Right ventricle myocardium inferior (tissue), 1 donor: ENCODE measurements at regions of chr18 and their contacts with region 1.

Region 1: GRCh38 chr18:54671291-54671881 is 80.3 kb downstream of the DYNAP start:
- DNase-seq: no peak
- ATAC-seq: no peak

Region 2: GRCh38 chr18:54444319-54444914 is 227.0 kb before region 1 on chr18:
- intact Hi-C with region 1: loop called (anchors 5 kb)
- DNase-seq: no peak
- ATAC-seq: no peak

Region 3: DNA sequence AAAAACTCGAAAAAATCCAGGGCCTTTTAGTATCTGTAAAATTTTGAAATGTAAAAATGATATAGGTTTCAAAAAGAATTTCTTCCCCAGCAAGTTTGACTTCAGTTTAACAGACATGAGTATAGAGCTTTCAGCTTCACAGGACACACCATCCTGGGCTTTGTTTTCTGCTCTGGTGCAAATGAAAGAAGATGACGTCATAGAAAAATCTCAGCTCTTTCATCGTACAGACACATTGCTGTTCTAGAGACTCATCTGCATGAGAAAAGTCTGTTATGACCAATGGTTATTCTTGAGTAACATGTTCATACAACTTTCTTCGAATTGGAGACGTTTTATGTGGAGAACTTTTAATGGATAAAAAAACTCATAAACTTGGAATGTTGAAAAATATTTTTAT is 192.0 kb before region 1 on chr18:
- intact Hi-C with region 1: no loop called
- DNase-seq: no peak
- ATAC-seq: no peak

Region 4: DNA sequence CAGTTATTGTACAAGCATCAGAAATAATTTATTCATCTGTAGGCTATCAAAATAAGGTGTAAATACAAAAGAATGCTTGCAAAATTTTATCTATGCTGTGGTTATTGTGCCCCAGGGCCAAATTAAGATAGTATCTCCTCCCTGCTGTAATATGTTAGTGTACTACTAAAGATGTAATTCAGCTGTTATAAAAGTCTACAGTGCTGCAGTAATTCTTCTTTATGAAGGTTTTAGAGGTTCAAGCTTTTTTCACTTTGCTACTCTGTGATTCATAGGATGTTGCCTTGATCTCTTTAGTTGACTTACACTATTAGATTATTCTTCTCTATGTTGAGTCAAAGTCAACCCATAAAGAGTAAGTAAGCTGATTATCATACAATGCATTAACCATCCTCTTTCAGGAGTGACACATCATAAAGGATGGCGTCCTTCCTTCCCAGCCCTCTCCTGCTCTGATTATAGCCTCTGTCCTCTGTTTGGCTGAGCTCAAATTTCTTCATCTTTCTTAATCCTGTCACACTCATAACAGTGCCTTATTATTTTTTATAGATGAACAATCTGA is 109.6 kb before region 1 on chr18:
- intact Hi-C with region 1: loop called (anchors 5 kb)
- DNase-seq: no peak
- ATAC-seq: no peak

Region 5: DNA sequence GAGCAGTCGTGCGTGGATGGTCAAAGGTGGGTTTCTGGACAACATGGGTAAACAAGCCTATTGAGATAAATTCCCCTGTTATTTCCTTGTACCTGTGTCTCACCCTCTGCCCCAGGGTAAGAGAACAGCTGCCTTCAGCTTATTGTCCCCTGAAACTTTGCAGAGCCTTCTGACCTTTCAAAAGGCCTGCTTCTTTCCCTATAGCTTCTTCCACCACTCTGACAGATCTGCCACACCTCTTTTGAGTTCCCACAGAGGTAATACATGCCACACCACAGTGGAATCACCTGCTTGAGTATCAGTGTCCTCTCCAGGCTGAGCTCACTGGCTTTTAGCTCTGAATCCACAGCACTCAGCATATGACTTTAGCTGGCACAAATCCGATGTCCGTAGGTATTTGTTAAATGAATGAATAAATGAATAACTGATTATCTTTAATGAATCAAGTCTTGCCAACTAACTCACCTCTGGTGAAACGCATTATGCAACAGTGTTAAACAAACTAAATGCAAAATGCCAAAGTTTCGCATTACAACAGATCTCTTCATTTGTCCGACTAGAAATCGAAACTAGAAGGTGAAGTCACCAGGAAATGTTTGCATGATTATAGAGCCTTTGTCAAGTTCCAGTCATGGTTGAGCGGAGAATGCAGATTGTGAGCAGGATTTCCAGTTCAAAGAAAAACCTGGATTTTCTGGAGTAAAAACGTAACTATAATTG is 64.0 kb before region 1 on chr18:
- intact Hi-C with region 1: no loop called
- DNase-seq: no peak
- ATAC-seq: no peak